Activated CD8-positive, alpha-beta T cell treated with anti-CD3 and anti-CD28 coated beads for 36 hours (primary cell): ENCODE measurements at regions of chr13 and their contacts with region 1.

Region 1: DNA sequence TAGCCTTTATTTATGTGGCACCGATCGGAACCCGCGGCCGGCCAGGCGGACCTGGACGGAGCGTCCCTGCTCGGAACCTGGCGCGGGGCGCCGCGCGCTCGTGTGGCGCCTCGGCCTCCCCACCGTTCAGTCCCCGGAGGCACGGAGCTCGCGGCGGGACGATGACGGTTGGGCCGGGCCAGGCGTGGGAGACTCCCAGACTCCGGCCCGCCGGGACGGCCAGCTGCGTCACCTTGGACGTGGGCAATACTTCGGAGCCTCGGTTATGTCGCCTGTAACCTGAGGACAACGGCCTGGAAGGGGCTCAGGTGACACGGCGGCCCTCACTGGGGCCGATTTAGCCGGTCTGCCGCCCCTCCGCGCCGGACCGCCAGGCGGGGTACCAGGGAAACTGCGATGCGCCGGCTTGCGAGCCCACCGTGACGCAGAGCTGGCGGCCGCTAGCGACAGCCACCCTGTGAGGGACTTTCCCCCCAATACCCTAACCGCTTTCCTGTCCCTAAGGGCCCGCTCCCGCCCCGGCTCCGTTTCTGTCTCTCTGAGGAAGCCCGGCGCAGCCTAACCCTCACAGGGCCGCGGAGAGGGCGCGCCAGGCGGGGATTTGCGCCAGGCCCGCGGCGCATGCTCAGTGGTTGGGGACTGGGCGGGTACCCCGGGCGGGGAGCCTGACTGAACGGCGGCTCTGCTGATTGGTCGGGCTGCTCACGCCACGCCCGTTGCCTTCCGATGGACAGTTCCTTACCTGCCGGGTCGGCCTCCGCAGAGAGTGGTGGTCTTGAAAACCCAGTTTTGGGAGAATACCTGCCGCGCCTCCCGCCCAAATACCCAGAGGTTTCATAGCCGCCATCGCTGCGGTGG is 109.5 kb upstream of the DOCK9 start:
- DNase-seq: peak; percentile 93
- ATAC-seq: peak; percentile 88
- H3K4me3 Mint-ChIP-seq: peak overlapping the region; percentile 89
- H3K27ac Mint-ChIP-seq: peak overlapping the region; percentile 93
- H3K4me1 Mint-ChIP-seq: peaks cover 33% of the 10 kb centered on the region
- H3K27me3 Mint-ChIP-seq: no peaks in the 10 kb centered on the region
- CTCF ChIP-seq: peak; percentile 59

Region 2: DNA sequence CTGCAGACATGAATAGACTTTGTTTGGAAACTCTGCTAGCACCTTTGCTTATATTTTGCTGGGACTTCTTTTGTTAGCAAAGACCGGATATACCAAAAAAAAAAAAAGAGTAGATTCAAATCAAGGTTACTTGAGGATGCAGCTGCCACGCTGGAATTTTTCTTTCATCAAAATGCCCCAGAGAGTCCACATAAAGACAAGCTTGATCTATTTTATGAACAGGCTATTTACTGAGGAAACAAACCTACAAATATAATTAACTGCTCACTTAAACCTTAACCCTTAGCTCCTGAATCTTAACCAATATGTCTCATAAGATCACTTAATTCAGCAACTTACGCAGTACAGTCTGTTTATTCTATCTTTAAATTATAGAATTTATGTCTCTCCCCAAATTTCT is 82.3 kb before region 1 on chr13:
- CTCF ChIA-PET with region 1: no interaction called
- POLR2A ChIA-PET with region 1: no interaction called
- intact Hi-C with region 1: no loop called
- DNase-seq: no peak
- ATAC-seq: no peak
- H3K4me3 Mint-ChIP-seq: no peak overlapping the region
- H3K27ac Mint-ChIP-seq: no peak overlapping the region
- H3K4me1 Mint-ChIP-seq: peaks cover 60% of the 10 kb centered on the region
- H3K27me3 Mint-ChIP-seq: no peaks in the 10 kb centered on the region
- CTCF ChIP-seq: no peak

Region 3: DNA sequence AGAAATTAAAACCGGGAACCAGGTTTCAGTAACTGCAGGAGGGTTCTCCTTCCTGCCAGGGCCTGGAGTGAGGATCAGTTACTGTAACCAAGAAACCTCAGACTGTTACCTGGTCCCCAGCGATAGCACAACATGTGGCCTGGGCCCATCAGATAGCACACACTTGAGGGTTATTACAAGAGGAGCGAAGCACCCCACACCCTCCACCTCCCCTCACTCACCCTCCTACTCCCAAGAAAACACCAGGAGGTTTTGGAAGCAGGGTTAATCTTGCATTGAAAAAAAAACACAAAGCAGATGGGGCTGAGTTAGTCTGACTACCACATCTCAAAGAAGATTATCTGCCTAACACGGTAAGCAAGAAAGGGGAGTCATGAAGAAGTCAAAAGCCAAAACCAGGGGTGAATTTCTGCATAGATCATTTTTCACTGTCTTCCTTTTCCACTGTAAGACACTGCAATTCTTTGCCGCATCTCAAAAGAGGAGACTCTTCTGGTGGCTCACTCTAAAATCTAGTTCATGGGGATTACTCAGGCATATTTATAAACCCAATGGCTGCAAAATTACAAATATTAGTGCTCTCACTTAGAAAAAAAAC is 33.6 kb before region 1 on chr13:
- CTCF ChIA-PET with region 1: interaction called, 4 read pairs
- POLR2A ChIA-PET with region 1: interaction called, 12 read pairs
- intact Hi-C with region 1: loop called (anchors 5 kb)
- DNase-seq: peak; percentile 32
- ATAC-seq: no peak
- H3K4me3 Mint-ChIP-seq: no peak overlapping the region
- H3K27ac Mint-ChIP-seq: peak overlapping the region; percentile 69
- H3K4me1 Mint-ChIP-seq: peaks cover 71% of the 10 kb centered on the region
- H3K27me3 Mint-ChIP-seq: no peaks in the 10 kb centered on the region
- CTCF ChIP-seq: no peak

Region 4: DNA sequence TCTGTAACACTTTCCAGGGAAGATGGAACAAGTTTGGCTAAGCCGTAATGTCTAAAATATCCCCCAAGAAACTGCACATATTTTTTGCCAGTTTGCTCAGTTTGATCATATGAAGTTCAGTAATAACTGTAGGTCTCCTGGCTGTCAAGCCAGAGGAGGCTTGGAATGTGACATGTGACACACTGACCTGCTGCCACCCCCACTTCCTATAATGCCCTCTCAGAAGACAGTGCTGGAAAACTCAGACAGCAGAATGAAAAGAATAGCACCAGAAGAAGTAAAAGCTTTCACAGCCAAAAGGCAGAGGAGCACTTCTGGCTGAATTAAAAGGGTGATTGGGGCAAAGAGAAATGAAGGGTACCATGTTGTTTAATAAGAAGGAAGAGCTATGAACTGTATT is 45.9 kb after region 1 on chr13:
- CTCF ChIA-PET with region 1: no interaction called
- POLR2A ChIA-PET with region 1: no interaction called
- intact Hi-C with region 1: no loop called
- DNase-seq: no peak
- ATAC-seq: no peak
- H3K4me3 Mint-ChIP-seq: no peak overlapping the region
- H3K27ac Mint-ChIP-seq: no peak overlapping the region
- H3K4me1 Mint-ChIP-seq: no peaks in the 10 kb centered on the region
- H3K27me3 Mint-ChIP-seq: no peaks in the 10 kb centered on the region
- CTCF ChIP-seq: no peak